Head of caudate nucleus (tissue), 42 donors: ENCODE measurements at regions of chr1 and their contacts with region 1.

Region 1: DNA sequence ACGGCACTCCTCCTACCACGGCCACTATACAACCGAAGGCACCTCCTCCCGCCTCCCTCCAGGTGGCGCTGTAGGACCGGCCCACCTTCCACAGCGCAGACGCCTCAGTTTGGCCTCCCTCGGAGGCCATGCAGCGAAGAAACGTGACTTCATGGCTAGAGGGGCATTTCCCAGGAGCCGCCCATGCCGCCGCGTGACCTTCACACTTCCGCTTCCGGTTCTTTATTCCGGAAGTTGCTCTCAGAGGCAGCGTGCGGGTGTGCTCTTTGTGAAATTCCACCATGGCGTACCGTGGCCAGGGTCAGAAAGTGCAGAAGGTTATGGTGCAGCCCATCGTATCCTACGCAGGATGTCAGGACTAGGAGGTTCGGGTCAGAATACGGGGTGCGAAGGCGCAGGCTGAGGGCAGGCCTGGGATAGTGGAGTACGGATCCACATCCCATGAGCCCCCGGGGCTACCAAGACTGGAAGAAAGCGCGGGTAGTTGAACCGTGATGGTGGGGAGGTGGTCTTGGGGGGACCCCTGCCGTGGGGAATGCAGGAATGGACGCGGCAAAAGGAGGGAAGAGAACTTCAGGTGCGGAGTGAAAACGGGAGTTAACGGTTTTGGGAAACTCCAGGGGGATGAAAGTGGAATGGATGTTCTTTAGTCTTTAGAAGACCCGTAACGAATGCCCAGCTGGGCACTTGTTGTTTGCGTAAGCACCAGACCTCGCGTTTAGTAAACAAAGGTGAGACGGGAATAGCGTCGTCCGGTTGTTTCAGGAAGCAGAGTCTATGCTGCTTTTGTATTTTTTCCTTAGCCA is at the start of gene SNRPE:
- DNase-seq: peak; percentile 92 to 99 (median 96)

Region 2: GRCh38 chr1:203795441-203796235 is 65.9 kb before region 1 on chr1 and contains the starts of genes ZBED6 and ZC3H11A:
- intact Hi-C with region 1: loop called (anchors 10 kb)
- DNase-seq: peak; percentile 98 to 100 (median 99)

Region 3: GRCh38 chr1:203926025-203926540 is 64.5 kb after region 1 on chr1:
- intact Hi-C with region 1: no loop called
- DNase-seq: no peak

Region 4: DNA sequence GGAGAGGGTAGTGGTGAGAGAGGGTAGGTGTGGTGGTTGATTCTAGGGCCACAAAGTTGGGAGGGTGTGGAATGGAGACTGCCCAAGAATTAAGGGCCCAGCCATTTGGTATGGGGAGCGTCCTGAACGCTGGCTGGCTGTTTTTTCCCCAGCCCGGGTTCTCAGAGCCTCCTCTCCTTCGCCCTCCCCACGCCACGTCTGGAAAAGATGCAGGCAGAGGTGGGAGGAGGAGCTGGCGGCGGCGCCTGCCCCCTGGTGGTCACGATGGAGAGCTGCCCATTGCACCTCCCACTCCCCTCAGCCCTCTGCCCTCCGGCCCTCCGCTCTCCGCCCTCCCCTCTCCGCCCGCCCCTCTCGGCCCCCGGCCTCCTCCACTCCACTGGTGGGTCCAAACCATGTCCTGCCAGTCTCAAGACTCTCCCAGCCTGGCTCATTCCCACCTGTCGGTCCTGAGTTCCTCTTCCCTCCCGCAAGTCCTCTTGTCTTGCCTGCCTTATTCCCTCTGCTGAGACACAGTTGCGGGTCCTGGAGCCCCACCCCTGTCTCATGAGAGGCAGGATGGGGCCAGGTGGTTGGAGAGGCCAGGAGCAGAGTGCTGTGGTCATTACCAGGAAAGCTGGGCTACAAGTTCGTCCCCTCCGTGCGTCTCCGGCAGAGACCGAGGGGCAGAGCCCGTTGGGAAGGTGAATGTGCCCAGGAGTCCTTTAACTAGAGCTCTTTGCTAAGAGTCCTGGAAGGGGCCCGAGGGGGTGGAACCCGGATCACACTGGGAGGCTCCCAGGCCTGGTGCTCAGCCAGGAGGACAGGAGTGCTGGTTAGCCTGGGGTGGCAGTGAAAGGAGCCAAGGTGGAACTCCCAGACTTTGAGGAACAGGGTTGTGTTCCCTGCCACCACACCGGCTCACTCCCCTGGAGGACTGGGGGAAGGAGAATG is 267.6 kb after region 1 on chr1:
- intact Hi-C with region 1: loop called (anchors 2 kb)
- DNase-seq: peak in 41 of 42 donors; percentile 49 to 88 (median 74)

Region 5: DNA sequence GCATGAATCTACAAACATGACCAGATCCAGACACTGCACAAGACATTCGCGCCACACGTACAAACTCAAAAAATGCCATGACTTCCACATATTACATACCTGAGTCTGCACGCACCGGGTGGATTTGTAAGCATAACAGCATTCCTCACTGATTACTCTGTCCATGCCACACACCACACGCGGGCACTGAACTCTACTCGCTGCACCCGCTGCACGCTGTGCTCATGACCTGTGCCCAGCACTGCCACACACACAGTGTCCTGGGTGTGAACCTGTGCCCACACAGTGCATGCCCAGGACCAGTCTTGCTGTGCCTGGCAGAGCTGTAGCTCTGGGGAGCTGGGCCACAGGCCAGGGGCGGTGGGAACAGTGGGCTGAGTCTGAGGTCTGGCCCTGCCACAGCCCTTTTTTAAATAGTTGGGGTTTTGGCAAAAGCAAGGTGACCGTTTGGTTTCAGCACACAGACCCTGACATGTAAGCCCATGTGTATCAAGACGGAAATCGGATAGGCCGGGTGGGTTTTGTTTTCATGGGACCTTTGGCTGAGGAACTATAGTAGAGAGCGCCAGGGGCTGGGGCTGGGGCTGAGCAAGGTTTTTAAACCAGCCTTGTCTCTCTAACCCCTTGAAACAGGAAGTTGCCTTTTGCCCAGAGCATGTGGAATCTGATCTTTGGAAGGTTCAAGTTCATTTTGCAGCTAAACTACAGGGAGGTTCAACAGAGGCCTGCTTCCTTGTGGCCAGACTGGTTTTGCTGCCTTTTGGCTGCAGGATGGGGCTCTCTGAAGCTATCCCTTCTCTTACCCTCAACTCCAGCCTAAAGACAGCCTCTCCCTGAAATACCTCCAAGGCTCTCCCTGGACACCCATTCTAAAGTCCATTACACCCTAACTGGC is 364.5 kb after region 1 on chr1:
- intact Hi-C with region 1: no loop called
- DNase-seq: no peak